HAP-1 (cell line): ENCODE measurements at regions of chr9 and their contacts with region 1.

Region 1: DNA sequence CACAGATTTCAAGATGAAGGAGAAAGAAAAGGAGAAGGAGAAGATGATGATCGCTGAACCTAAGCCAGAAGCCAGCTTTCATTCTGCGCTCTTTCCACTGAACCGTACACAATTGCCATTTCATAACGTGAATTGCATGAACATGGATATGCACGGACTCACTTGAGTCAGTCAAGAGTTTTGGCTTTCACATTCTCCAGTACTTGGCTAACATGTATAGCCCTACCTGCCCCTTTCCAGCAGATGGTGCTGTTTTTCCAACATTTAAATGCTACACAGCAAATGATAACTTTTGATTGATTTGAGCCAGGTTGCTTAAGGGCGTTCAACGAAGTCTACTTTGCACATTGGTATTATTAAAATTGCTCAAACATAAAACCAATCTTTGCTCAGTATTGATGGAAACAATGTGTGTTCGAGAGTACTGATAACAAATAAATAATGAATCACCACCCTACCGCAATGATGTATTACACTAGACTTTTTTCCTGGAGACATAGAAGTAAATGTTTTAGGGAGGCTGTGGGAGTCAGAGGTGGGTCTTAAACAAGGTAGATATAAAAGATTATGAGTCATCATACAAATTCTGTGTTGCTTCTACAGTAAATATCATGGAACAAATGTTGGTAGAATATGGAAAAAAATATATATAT is 196.4 kb downstream of the TRPM3 start:
- DNase-seq: peak; percentile 56 to 81
- H3K4me3 ChIP-seq: no peak overlapping the region
- H3K4me1 ChIP-seq: no peaks in the 10 kb centered on the region; the same call in 1 of the 2 replicates
- H3K27me3 ChIP-seq: no peaks in the 10 kb centered on the region; the same call in 1 of the 2 replicates

Region 2: GRCh38 chr9:71001780-71002386 is 76.9 kb after region 1 on chr9:
- in situ Hi-C with region 1: loop called (anchors 5 kb)
- DNase-seq: peak; percentile 47 to 70
- H3K4me3 ChIP-seq: no peak overlapping the region
- H3K4me1 ChIP-seq: no peaks in the 10 kb centered on the region
- H3K27me3 ChIP-seq: no peaks in the 10 kb centered on the region

Region 3: DNA sequence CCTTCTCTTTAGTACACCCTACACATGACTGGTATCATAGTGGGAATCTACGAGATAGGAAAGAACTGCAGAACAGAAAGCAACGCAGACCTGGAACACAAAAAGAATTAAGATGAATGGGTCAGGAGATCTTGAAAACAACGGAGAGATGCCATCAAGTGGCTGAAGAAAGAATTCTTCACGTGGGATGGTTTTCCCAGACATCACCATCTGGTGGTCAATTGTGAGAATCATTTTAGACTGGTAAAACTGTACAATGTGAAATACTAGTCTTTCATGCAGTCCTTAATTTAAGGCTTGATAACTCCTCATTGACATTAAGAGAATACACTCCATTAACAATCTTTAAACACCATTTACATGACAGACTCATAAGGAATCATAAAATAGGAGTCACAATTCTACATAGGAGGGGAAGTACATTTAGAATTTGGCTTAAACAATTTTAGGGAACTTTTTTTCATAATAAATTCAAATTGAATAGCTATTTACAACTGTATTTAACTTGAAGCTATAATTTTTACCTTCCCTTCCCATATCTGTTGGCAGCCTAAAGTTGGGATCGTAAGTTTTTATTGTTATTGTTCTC is 324.8 kb after region 1 on chr9:
- in situ Hi-C with region 1: loop called (anchors 10 kb)
- DNase-seq: peak; percentile 56 to 91
- H3K4me3 ChIP-seq: no peak overlapping the region
- H3K4me1 ChIP-seq: peaks cover 28% of the 10 kb centered on the region
- H3K27me3 ChIP-seq: no peaks in the 10 kb centered on the region; the same call in 1 of the 2 replicates